ENCODE measurements at regions of chr9 and their contacts with region 1.

Region 1: DNA sequence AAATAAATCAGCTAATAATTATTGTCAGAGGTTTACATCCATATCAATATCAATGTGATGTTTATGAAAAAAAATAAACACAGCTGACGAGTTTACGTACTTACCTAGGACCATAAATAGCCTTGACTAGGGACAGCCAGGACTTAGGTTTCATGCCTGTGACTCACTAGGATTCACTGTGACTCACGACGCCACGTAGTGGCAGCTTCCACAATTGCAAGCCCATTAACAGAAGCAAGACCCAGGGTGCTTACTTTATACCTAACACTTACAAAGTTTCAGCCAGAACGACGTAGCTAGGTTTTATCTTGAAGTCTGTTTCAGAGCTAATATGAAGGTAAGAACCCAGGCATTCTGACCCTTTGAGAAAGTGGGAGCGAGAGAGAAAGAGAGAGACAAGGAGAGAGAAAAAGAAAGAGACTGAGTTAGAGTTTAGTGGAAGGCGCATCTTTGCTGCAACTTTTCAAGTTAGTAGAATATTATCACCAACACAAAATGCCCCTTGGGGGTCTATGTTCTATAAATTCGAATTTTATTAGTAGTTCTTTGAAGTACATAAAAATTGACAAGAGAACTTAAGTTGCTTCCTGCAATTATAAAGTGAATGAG is 191.2 kb downstream of the GNA14 start:
- DNase-seq: peak; percentile 71
- H3K4me3 Mint-ChIP-seq: no peak overlapping the region
- H3K27ac Mint-ChIP-seq: no peak overlapping the region
- H3K4me1 Mint-ChIP-seq: peaks cover 25% of the 10 kb centered on the region
- H3K27me3 Mint-ChIP-seq: peaks cover 4% of the 10 kb centered on the region

Region 2: DNA sequence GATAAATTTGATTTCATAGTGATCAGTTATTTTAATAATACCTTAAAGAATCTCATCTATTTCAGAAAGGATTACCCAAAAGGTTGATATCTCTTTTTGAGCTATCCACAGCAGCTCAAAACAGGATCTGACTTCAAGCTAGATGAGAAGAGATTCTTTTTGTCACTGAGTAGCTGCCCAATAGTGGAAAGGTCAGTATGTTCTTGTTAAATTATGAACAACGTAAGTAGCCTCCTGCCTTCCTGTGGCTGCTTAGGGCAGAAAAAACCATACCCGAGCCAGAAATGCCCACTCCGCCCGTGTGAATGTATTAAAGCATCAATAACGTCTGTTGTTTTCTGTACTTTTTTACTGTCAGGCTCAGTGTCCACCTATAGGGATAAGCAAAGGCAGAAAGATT is 499.7 kb before region 1 on chr9:
- intact Hi-C with region 1: no loop called
- DNase-seq: no peak
- H3K4me3 Mint-ChIP-seq: no peak overlapping the region
- H3K27ac Mint-ChIP-seq: no peak overlapping the region
- H3K4me1 Mint-ChIP-seq: no peaks in the 10 kb centered on the region
- H3K27me3 Mint-ChIP-seq: no peaks in the 10 kb centered on the region

Region 3: DNA sequence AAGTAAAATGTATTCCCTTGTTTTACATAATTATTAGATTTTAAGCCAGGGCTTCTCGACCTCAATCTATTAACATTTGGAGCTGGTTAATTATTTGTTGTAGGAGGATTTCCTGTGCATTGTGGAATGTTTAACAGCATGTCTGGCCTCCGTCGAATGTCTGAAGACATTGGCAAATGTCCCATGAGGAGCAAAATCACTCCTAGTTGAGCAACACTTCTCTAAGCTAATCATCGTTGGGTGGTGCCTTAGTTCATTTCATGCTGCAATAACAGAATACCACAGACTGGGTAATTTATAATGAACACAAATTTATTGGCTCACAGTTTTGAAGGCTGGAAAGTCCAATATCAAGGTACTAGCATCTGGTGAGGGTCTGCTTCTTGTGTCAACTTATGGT is 293.0 kb before region 1 on chr9:
- intact Hi-C with region 1: loop called (anchors 2 kb)
- DNase-seq: no peak
- H3K4me3 Mint-ChIP-seq: no peak overlapping the region
- H3K27ac Mint-ChIP-seq: no peak overlapping the region
- H3K4me1 Mint-ChIP-seq: no peaks in the 10 kb centered on the region
- H3K27me3 Mint-ChIP-seq: peaks cover 9% of the 10 kb centered on the region

Region 4: DNA sequence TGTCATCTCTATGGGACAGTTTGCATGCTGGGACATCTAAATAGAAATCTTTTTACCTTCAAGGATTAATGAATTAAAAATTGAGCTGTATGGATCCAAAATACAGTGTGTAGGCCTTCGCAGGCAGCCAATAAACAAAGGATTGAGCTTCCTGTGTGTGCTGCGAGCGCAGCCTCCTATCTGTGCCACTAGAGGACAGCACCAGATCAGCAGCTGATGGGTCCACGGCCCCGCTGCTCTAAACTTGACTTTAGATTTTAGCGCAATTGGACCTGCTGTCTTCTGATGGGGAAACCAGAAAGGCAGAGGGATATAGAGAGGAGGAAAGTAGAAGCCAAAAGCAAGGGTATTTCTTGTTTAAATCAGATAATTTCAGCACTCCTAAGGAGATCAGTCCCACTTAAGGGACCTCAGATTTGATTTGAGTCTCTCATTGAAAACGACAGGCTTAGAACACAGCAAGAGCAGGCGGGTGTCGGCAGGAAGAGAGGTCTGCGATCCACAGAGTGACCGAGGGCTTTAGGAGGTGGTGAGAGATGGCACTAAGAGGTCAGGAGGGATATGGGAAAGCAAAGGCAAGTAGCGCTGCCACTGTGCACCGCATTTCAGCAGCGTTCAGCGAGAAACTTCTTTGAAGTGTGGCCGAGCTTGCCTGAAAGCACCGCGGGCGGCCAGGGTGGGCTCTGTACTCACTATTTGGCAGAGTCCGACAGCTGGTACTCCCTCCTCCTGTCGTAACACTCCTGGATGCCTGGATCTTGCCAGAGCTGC is 23.1 kb before region 1 on chr9:
- intact Hi-C with region 1: loop called (anchors 2 kb)
- DNase-seq: peak; percentile 15
- H3K4me3 Mint-ChIP-seq: no peak overlapping the region
- H3K27ac Mint-ChIP-seq: no peak overlapping the region
- H3K4me1 Mint-ChIP-seq: peaks cover 5% of the 10 kb centered on the region
- H3K27me3 Mint-ChIP-seq: peaks cover 3% of the 10 kb centered on the region

Measured in activated T-helper 1 cell treated with anti-CD3 and anti-CD28 coated beads, Interleukin-12 subunit alpha, Interleukin-12 subunit beta, Interleukin-2, Interleukin-4 antibody, amounts not matched to agents 30 ng/mL and 10 ng/mL and 1 ng/mL, durations not matched to agents 14 hours and 24 hours and 36 hours (primary cell).